ENCODE measurements at regions of chr12 and their contacts with region 1.

Region 1: GRCh38 chr12:119649202-119649808 is 18.6 kb upstream of the PRKAB1 start:
- DNase-seq: no peak
- ATAC-seq: peak; percentile 67
- H3K4me3 ChIP-seq: no peak overlapping the region
- H3K27ac ChIP-seq: no peak overlapping the region
- H3K4me1 ChIP-seq: peaks cover 0 to 3% of the 10 kb centered on the region in 2 experiments; a peak in 1 of 4 replicates
- H3K27me3 ChIP-seq: no peaks in the 10 kb centered on the region
- CTCF ChIP-seq: peak; percentile 73 to 83 (median 77)
- POLR2A ChIP-seq: no peak
- RAD21 ChIP-seq: peak; percentile 75

Region 2: GRCh38 chr12:119444456-119445044 is 204.8 kb before region 1 on chr12:
- CTCF ChIA-PET with region 1: interaction called, 9 read pairs
- POLR2A ChIA-PET with region 1: no interaction called
- RAD21 ChIA-PET with region 1: no interaction called
- intact Hi-C with region 1: loop called (anchors 5 kb)
- DNase-seq: peak; percentile 85
- ATAC-seq: peak; percentile 99
- H3K4me3 ChIP-seq: peak overlapping the region; percentile 19 to 35; a peak in 3 of 4 replicates
- H3K27ac ChIP-seq: no peak overlapping the region
- H3K4me1 ChIP-seq: peaks cover 0 to 4% of the 10 kb centered on the region in 2 experiments; a peak in 2 of 4 replicates
- H3K27me3 ChIP-seq: peaks cover 18% of the 10 kb centered on the region
- CTCF ChIP-seq: peak; percentile 99 to 100 (median 100)
- POLR2A ChIP-seq: no peak
- RAD21 ChIP-seq: peak; percentile 68

Region 3: DNA sequence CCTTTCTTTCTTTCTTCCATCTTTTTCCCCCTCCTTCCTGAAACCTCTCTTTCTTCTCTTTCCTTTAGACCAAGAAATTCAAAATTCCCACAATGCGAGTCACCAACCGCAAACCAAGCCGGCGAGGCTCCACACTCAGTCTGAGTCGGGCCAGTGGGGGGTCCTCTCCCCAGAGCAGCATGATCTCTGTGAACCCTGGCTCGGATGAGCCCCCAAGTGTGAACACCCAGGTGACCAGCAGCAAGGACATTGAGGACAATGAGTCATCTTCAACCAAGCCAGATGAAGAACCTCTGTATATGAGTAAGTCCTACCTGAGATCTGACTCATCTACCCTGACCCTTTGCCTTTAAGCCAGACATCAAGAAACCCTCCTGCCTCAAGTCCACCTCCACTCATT is 144.3 kb before region 1 on chr12:
- CTCF ChIA-PET with region 1: no interaction called
- POLR2A ChIA-PET with region 1: no interaction called
- RAD21 ChIA-PET with region 1: no interaction called
- intact Hi-C with region 1: loop called (anchors 10 kb)
- DNase-seq: peak; percentile 32
- ATAC-seq: peak; percentile 81
- H3K4me3 ChIP-seq: no peak overlapping the region
- H3K27ac ChIP-seq: no peak overlapping the region
- H3K4me1 ChIP-seq: peaks cover 2 to 17% of the 10 kb centered on the region in 2 experiments; a peak in 2 of 4 replicates
- H3K27me3 ChIP-seq: 0 out of 2 replicates have a peak, but pooled peaks cover 7% of the 10 kb centered on the region
- CTCF ChIP-seq: no peak
- POLR2A ChIP-seq: no peak
- RAD21 ChIP-seq: no peak

Region 4: GRCh38 chr12:119749666-119750065 is 100.4 kb after region 1 on chr12:
- CTCF ChIA-PET with region 1: no interaction called
- POLR2A ChIA-PET with region 1: no interaction called
- RAD21 ChIA-PET with region 1: no interaction called
- intact Hi-C with region 1: no loop called
- DNase-seq: no peak
- ATAC-seq: no peak
- H3K4me3 ChIP-seq: no peak overlapping the region
- H3K27ac ChIP-seq: no peak overlapping the region
- H3K4me1 ChIP-seq: no peaks in the 10 kb centered on the region
- H3K27me3 ChIP-seq: no peaks in the 10 kb centered on the region
- CTCF ChIP-seq: no peak
- POLR2A ChIP-seq: no peak
- RAD21 ChIP-seq: no peak

Measured in HCT116 (cell line).